CD14-positive monocyte (primary cell): ENCODE measurements at regions of chr12 and their contacts with region 1.

Region 1: GRCh38 chr12:98424726-98425401 is 90.5 kb upstream of the TMPO start:
- DNase-seq: peak; percentile 57 to 71 (median 64)
- H3K4me3 ChIP-seq: no peak overlapping the region
- H3K4me3 Mint-ChIP-seq: no peak overlapping the region
- H3K27ac ChIP-seq: no peak overlapping the region
- H3K27ac Mint-ChIP-seq: peak overlapping the region in 2 of 7 donors; percentile 8 to 69
- H3K4me1 ChIP-seq: peaks cover 3 to 10% of the 10 kb centered on the region in 2 donors
- H3K4me1 Mint-ChIP-seq: peaks cover 7% of the 10 kb centered on the region
- H3K27me3 ChIP-seq: no peaks in the 10 kb centered on the region
- H3K27me3 Mint-ChIP-seq: peaks cover 2 to 8% (median 5%) of the 10 kb centered on the region in 3 donors
- CTCF ChIP-seq: peak; percentile 88

Region 2: GRCh38 chr12:98464190-98464589 is 39.3 kb after region 1 on chr12:
- intact Hi-C with region 1: loop called in 1 of 2 experiments (anchors 5 kb)
- DNase-seq: peak; percentile 81 to 93 (median 89)
- H3K4me3 ChIP-seq: peak overlapping the region in 1 of 3 experiments; percentile 44
- H3K4me3 Mint-ChIP-seq: peak overlapping the region in 1 of 2 donors; percentile 39
- H3K27ac ChIP-seq: peak overlapping the region; percentile 55 to 81
- H3K27ac Mint-ChIP-seq: peak overlapping the region; percentile 89 to 98 (median 94)
- H3K4me1 ChIP-seq: peaks cover 61 to 69% of the 10 kb centered on the region in 2 donors
- H3K4me1 Mint-ChIP-seq: peaks cover 69% of the 10 kb centered on the region
- H3K27me3 ChIP-seq: no peaks in the 10 kb centered on the region
- H3K27me3 Mint-ChIP-seq: peaks cover 0 to 2% (median 0%) of the 10 kb centered on the region in 3 donors
- CTCF ChIP-seq: no peak

Region 3: DNA sequence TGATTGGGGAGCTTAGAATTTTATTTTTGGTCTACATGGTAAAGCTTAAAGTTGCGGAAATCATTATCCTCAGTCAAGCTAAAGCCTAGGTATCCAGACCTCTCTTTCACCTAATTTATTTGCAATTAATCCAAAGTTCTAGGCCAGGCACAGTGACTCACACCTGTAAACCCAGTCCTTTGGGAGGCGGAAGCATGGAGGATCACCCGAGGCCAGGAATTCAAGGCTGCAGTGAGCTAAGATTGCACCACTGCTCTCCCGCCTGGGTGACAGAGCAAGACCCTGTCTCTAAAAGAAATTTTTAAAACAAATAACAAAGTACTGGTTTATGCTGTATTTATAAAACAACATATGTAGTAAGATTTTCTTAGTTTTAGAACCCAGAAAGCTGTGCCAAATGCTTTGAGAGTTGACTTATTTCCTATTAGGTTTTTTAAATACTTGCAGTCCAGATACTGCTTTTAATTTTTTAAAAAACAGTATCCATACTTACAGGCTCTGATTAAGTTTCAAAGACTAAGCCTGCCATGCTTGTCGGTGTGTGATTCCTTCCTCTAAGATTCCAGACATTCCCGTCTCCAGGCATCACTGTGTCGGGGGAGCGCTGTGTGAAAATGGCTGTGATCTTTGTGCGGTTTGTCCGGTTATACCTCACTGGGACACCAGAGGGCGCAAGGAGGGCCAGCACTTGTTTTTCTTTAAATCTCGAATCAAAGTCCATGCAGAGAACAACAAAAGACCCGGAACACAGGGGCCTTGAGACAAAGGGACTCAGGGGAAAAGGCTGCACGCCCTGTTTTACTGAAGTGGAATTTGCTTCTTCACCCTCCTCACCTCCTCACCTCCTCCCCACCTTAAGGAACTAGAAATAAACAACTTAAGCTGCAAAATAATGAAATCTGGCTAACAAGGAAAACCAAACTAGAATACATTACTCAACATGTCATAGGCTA is 65.9 kb after region 1 on chr12:
- intact Hi-C with region 1: loop called in 1 of 2 experiments (anchors 5 kb)
- DNase-seq: peak; percentile 62 to 75 (median 74)
- H3K4me3 ChIP-seq: peak overlapping the region in 2 of 3 experiments; percentile 38 to 60
- H3K4me3 Mint-ChIP-seq: peak overlapping the region; percentile 48 to 58
- H3K27ac ChIP-seq: peak overlapping the region in 1 of 2 donors; percentile 62
- H3K27ac Mint-ChIP-seq: peak overlapping the region; percentile 66 to 90 (median 86)
- H3K4me1 ChIP-seq: peaks cover 9 to 18% of the 10 kb centered on the region in 2 donors
- H3K4me1 Mint-ChIP-seq: peaks cover 14% of the 10 kb centered on the region
- H3K27me3 ChIP-seq: no peaks in the 10 kb centered on the region
- H3K27me3 Mint-ChIP-seq: peaks cover 0 to 1% (median 0%) of the 10 kb centered on the region in 3 donors
- CTCF ChIP-seq: peak; percentile 85

Region 4: GRCh38 chr12:98516184-98516873 is 91.5 kb after region 1 on chr12:
- intact Hi-C with region 1: loop called (anchors 2 to 5 kb)
- DNase-seq: peak; percentile 66 to 88 (median 78)
- H3K4me3 ChIP-seq: peak overlapping the region; percentile 76 to 93 (median 90)
- H3K4me3 Mint-ChIP-seq: peak overlapping the region; percentile 97 to 98
- H3K27ac ChIP-seq: peak overlapping the region; percentile 12 to 89
- H3K27ac Mint-ChIP-seq: peak overlapping the region; percentile 83 to 96 (median 96)
- H3K4me1 ChIP-seq: peaks cover 38 to 63% of the 10 kb centered on the region in 2 donors
- H3K4me1 Mint-ChIP-seq: peaks cover 51% of the 10 kb centered on the region
- H3K27me3 ChIP-seq: no peaks in the 10 kb centered on the region
- H3K27me3 Mint-ChIP-seq: peaks cover 0 to 2% (median 0%) of the 10 kb centered on the region in 3 donors
- CTCF ChIP-seq: peak; percentile 83